ENCODE measurements at regions of chr15 and their contacts with region 1.

Region 1: GRCh38 chr15:53453253-53454105 is 306.0 kb downstream of the WDR72 start:
- DNase-seq: peak; percentile 100
- ATAC-seq: peak; percentile 82
- H3K4me3 ChIP-seq: peak overlapping the region in 1 of 3 experiments; percentile 14; a peak in 1 of 6 replicates
- H3K27ac ChIP-seq: peak overlapping the region; percentile 97
- H3K4me1 ChIP-seq: peaks cover 91% of the 10 kb centered on the region
- H3K27me3 ChIP-seq: no peaks in the 10 kb centered on the region
- CTCF ChIP-seq: peak; percentile 21
- EP300 ChIP-seq: peak; percentile 97 to 100
- POLR2A ChIP-seq: peak; percentile 40 to 68
- RAD21 ChIP-seq: no peak; the same call in 1 of the 2 replicates

Region 2: DNA sequence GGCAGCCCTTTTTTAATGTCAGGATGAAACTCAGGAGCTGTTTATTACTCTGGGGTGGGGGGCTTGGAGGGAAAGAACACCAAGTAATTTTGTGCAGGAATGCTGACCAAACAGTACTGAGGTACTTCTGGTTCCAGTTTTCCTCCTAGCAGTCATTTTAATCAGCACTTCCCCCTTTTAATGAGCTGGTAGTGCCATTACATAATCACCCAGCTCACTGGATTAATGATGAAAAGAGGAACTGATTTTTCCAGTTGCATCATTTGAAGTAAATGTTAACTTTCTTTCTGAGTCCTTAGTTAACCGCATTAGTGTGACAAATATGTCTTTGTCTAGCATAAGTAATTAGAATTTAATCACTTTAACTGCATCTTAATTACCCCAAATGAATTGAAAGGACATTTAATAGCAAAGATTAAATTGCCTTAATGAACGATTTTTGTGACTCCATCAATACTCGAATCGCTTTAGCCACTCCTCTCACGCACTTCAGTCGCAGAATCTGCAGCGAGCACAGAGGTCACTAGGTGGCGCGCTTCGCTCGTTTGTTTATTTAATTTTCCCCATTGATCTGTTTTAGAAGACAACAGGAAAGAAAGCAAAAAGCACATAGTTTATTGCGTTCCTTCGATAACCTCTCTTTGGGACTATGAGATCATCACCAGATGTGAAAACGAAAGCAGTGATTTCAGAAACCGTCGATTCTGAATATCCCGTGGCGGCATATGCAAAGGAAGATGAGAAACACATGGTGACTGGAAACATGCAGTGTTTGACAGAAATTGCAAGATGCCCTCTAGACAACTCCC is 673.1 kb before region 1 on chr15:
- CTCF ChIA-PET with region 1: no interaction called
- POLR2A ChIA-PET with region 1: interaction called, 4 read pairs
- in situ Hi-C with region 1: no loop called
- intact Hi-C with region 1: loop called (anchors 5 kb)
- DNase-seq: peak; percentile 51
- ATAC-seq: peak; percentile 49; the same call in 2 of the 3 replicates
- H3K4me3 ChIP-seq: no peak overlapping the region
- H3K27ac ChIP-seq: no peak overlapping the region
- H3K4me1 ChIP-seq: peaks cover 50% of the 10 kb centered on the region
- H3K27me3 ChIP-seq: no peaks in the 10 kb centered on the region
- CTCF ChIP-seq: peak; percentile 86
- EP300 ChIP-seq: no peak
- POLR2A ChIP-seq: no peak
- RAD21 ChIP-seq: peak; percentile 83

Region 3: GRCh38 chr15:53414167-53414566 is 39.3 kb before region 1 on chr15:
- CTCF ChIA-PET with region 1: interaction called, 3 read pairs
- POLR2A ChIA-PET with region 1: interaction called, 13 read pairs
- in situ Hi-C with region 1: no loop called
- intact Hi-C with region 1: no loop called
- DNase-seq: peak; percentile 75
- ATAC-seq: peak; percentile 98
- H3K4me3 ChIP-seq: no peak overlapping the region
- H3K27ac ChIP-seq: peak overlapping the region; percentile 50
- H3K4me1 ChIP-seq: peaks cover 44% of the 10 kb centered on the region
- H3K27me3 ChIP-seq: no peaks in the 10 kb centered on the region
- CTCF ChIP-seq: no peak
- EP300 ChIP-seq: peak; percentile 43 to 54; a peak in 2 of 4 replicates
- POLR2A ChIP-seq: no peak
- RAD21 ChIP-seq: no peak

Region 4: DNA sequence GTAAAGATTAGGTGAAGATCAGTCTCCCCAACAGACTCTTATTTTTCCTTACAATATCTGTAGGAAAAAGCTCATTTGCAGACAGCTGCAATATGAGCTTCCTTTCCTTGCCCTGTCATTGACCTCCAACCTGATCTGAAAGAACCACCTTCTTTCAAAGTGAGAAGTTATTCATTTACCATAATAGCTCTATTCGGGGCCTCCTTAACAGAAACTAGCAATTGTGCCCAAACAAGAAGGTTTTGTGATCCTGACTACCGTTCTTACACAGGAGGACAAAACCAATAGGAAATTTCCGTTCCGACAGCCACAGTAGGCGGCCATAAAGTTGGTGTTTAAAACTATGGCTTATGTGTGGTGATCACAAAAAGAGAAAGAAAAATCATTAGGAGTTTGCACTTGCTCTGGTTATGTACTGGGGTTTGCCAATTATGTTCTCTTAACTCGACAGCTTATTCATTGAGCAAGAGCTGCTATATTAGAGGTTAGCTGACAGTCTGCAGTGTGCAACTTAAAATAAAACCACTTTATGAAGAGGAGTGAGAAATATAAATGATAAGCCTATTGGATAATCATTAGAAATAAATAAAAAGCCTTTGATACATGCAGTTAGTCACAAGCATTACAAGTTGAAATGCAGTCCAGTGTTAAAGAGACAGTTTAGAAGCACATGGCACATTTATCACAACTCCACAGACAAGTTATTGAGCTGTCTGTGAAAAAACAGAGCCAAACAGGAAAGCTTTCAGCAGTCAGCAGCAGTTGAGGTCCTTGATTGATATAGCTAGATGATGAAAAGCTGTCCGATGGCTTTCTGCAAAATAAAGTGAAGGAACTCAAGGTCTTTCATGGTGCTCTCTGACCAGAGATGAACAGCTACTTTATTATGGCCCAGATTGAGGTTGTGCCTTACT is 106.1 kb after region 1 on chr15:
- CTCF ChIA-PET with region 1: no interaction called
- POLR2A ChIA-PET with region 1: no interaction called
- in situ Hi-C with region 1: no loop called
- intact Hi-C with region 1: loop called (anchors 2 kb)
- DNase-seq: peak; percentile 75
- ATAC-seq: peak; percentile 98
- H3K4me3 ChIP-seq: peak overlapping the region in 2 of 3 experiments; percentile 9 to 21; a peak in 2 of 6 replicates
- H3K27ac ChIP-seq: peak overlapping the region; percentile 76
- H3K4me1 ChIP-seq: peaks cover 31% of the 10 kb centered on the region
- H3K27me3 ChIP-seq: no peaks in the 10 kb centered on the region
- CTCF ChIP-seq: no peak
- EP300 ChIP-seq: peak in 1 of 2 experiments; percentile 62; a peak in 1 of 4 replicates
- POLR2A ChIP-seq: no peak
- RAD21 ChIP-seq: no peak

Region 5: GRCh38 chr15:53833134-53833624 is 379.7 kb after region 1 on chr15:
- CTCF ChIA-PET with region 1: no interaction called
- POLR2A ChIA-PET with region 1: no interaction called
- in situ Hi-C with region 1: loop called (anchors 25 kb)
- intact Hi-C with region 1: loop called (anchors 10 kb)
- DNase-seq: peak; percentile 94
- ATAC-seq: peak; percentile 67
- H3K4me3 ChIP-seq: peak overlapping the region; percentile 2 to 53 (median 14); a peak in 1 of 6 replicates
- H3K27ac ChIP-seq: peak overlapping the region; percentile 99
- H3K4me1 ChIP-seq: peaks cover 85% of the 10 kb centered on the region
- H3K27me3 ChIP-seq: no peaks in the 10 kb centered on the region
- CTCF ChIP-seq: no peak
- EP300 ChIP-seq: peak in 1 of 2 experiments; percentile 92; a peak in 2 of 4 replicates
- POLR2A ChIP-seq: peak; percentile 41 to 69
- RAD21 ChIP-seq: no peak